ENCODE measurements at regions of chr18 and their contacts with region 1.

Region 1: GRCh38 chr18:10767658-10768057 is 241.8 kb downstream of the NAPG start:
- DNase-seq: no peak
- ATAC-seq: no peak
- H3K4me3 ChIP-seq: no peak overlapping the region
- H3K4me1 ChIP-seq: no peaks in the 10 kb centered on the region
- CTCF ChIP-seq: no peak

Region 2: GRCh38 chr18:10822456-10822855 is 54.8 kb after region 1 on chr18:
- intact Hi-C with region 1: loop called in 1 of 2 experiments (anchors 10 kb)
- DNase-seq: no peak
- ATAC-seq: no peak
- H3K4me3 ChIP-seq: no peak overlapping the region
- H3K4me1 ChIP-seq: no peaks in the 10 kb centered on the region
- CTCF ChIP-seq: no peak